Psoas muscle (tissue), 8 donors: ENCODE measurements at regions of chr12 and their contacts with region 1.

Region 1: GRCh38 chr12:88897723-88898122 is 317.5 kb upstream of the KITLG start:
- DNase-seq: no peak
- ATAC-seq: peak; percentile 91 to 98 (median 94)
- H3K4me3 ChIP-seq: no peak overlapping the region
- H3K27ac ChIP-seq: peak overlapping the region; percentile 76
- H3K4me1 ChIP-seq: peaks cover 19% of the 10 kb centered on the region
- H3K27me3 ChIP-seq: no peaks in the 10 kb centered on the region
- CTCF ChIP-seq: no peak

Region 2: DNA sequence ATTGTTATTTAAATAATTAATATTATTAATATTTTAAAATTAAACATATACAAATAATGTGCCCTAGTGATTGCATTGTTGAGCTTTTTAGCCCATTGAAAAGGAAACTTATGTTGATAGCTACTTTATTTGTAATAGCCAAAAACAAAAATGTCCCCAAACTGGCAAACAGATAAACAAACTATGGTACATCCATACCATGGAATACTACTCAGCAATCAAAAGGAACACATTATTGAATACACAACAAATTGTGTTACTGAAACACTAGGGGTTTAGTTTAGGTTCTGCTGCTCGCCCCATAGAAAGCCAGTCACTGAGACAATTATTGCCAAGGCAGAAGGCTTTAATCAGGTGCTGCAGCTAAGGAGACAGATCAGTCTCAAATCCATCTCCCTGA is 77.7 kb before region 1 on chr12:
- intact Hi-C with region 1: no loop called
- DNase-seq: no peak
- ATAC-seq: no peak
- H3K4me3 ChIP-seq: no peak overlapping the region
- H3K27ac ChIP-seq: no peak overlapping the region
- H3K4me1 ChIP-seq: no peaks in the 10 kb centered on the region
- H3K27me3 ChIP-seq: no peaks in the 10 kb centered on the region
- CTCF ChIP-seq: no peak

Region 3: GRCh38 chr12:88944403-88944802 is 46.7 kb after region 1 on chr12:
- intact Hi-C with region 1: loop called in 1 of 2 experiments (anchors 2 kb)
- DNase-seq: no peak
- ATAC-seq: no peak
- H3K4me3 ChIP-seq: peak overlapping the region; percentile 19
- H3K27ac ChIP-seq: peak overlapping the region; percentile 83
- H3K4me1 ChIP-seq: peaks cover 36% of the 10 kb centered on the region
- H3K27me3 ChIP-seq: no peaks in the 10 kb centered on the region
- CTCF ChIP-seq: no peak

Region 4: DNA sequence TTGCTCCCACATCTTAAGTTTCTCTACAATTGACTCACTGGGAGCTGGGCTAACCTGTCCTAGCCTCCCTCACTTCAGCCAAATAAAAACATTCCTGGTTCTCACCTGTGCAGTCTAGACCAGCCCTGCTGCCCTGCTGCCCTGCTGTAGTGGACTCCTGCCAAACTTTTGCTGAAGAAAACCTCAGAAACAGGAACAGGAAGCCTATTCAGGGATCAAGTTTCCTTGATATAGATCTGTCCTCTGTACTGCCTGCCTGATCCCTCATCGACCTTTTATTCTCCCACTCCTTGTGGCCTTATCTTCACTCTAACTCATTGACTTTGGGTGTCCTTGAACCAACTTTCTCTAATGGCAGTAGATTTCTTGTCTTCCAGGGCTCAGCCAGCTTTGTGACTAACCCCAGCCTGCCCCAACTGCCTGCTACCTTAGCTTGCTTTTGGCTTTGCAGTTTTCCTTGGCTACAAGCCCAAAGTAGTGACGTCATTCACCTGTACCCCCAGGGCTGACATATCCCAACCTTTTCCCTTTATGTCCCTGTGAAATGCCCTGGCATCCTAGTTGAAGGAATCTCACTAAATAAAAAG is 219.8 kb after region 1 on chr12:
- intact Hi-C with region 1: no loop called
- DNase-seq: no peak
- ATAC-seq: no peak
- H3K4me3 ChIP-seq: no peak overlapping the region
- H3K27ac ChIP-seq: no peak overlapping the region
- H3K4me1 ChIP-seq: no peaks in the 10 kb centered on the region
- H3K27me3 ChIP-seq: no peaks in the 10 kb centered on the region
- CTCF ChIP-seq: no peak